ENCODE measurements at regions of chr17 and their contacts with region 1.

Region 1: GRCh38 chr17:37661400-37662014 is 18.3 kb upstream of the DDX52 start:
- DNase-seq: no peak
- H3K4me3 ChIP-seq: no peak overlapping the region
- H3K27ac ChIP-seq: no peak overlapping the region
- H3K4me1 ChIP-seq: no peaks in the 10 kb centered on the region
- H3K27me3 ChIP-seq: no peaks in the 10 kb centered on the region
- CTCF ChIP-seq: no peak
- POLR2A ChIP-seq: no peak

Region 2: GRCh38 chr17:37060928-37061327 is 600.6 kb before region 1 on chr17:
- intact Hi-C with region 1: no loop called
- DNase-seq: no peak
- H3K4me3 ChIP-seq: no peak overlapping the region
- H3K27ac ChIP-seq: no peak overlapping the region
- H3K4me1 ChIP-seq: no peaks in the 10 kb centered on the region
- H3K27me3 ChIP-seq: no peaks in the 10 kb centered on the region
- CTCF ChIP-seq: no peak
- POLR2A ChIP-seq: no peak

Region 3: DNA sequence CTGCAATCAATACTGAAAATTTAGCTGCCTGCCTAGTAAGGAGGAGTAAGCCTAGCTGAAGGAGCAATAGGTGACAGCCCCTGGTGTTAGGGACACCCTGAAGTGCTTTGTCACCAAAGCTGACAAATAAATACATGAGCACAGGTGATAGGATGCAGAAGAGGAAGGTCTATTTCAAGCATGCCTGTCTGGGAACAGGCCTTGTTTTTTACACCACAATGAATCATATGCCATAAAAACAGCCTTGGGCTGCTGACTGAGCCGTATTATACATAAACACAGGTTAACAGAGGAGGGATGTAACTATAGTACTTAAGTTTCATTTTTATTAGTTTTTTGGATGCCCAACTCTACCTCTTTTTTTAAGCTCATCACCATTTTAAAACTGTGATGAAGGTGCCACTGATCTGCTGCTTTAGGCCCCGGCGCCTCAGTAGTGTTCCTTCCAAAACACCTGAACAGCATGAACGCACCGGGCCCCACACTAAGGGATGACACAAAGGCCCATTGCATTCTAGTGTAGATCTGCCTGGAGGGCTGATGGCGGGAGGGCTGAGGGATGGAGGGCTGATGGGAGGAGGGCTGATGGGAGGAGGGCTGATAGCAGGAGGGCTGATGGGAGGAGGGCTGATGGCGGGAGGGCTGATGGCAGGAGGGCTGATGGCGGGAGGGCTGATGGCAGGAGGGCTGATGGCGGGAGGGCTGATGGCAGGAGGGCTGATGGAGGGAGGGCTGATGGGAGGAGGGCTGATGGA is 562.4 kb before region 1 on chr17:
- intact Hi-C with region 1: no loop called
- DNase-seq: no peak
- H3K4me3 ChIP-seq: no peak overlapping the region
- H3K27ac ChIP-seq: no peak overlapping the region
- H3K4me1 ChIP-seq: no peaks in the 10 kb centered on the region
- H3K27me3 ChIP-seq: no peaks in the 10 kb centered on the region
- CTCF ChIP-seq: no peak
- POLR2A ChIP-seq: no peak

Region 4: GRCh38 chr17:37476431-37477120 is 184.9 kb before region 1 on chr17:
- intact Hi-C with region 1: loop called (anchors 5 kb)
- DNase-seq: peak in 1 of 2 donors; percentile 90
- H3K4me3 ChIP-seq: no peak overlapping the region
- H3K27ac ChIP-seq: peak overlapping the region; percentile 76 to 89
- H3K4me1 ChIP-seq: peaks cover 4 to 8% of the 10 kb centered on the region in 2 donors
- H3K27me3 ChIP-seq: no peaks in the 10 kb centered on the region
- CTCF ChIP-seq: no peak
- POLR2A ChIP-seq: no peak